ENCODE measurements at regions of chr4 and their contacts with region 1.

Region 1: DNA sequence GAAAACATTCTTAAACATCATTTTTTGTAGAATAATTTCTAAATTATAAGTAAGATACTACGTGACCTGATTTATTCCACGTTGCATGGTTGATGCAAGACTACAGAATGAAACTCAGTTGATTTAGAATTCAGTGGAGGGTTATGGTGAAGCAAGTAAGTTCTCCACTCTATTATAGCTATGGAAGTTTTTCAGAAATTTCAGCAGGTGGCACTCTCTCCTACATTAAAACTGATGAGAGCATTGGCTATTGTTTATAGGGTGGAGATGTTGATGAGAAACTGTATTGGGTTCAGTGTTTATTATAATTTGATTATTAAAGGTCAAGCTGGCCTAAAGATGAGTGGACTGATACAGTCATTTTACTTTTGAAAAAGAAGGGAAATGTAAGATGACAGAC is 88.0 kb downstream of the FNIP2 start:
- DNase-seq: peak; percentile 44
- H3K4me3 ChIP-seq: no peak overlapping the region; a peak in 1 of 4 replicates
- H3K27ac ChIP-seq: peak overlapping the region in 1 of 2 experiments; percentile 18; a peak in 1 of 4 replicates
- H3K4me1 ChIP-seq: peaks cover 0 to 11% of the 10 kb centered on the region in 2 experiments; a peak in 2 of 4 replicates
- H3K27me3 ChIP-seq: no peaks in the 10 kb centered on the region
- CTCF ChIP-seq: peak; percentile 74
- EP300 ChIP-seq: no peak
- RAD21 ChIP-seq: peak; percentile 81

Region 2: DNA sequence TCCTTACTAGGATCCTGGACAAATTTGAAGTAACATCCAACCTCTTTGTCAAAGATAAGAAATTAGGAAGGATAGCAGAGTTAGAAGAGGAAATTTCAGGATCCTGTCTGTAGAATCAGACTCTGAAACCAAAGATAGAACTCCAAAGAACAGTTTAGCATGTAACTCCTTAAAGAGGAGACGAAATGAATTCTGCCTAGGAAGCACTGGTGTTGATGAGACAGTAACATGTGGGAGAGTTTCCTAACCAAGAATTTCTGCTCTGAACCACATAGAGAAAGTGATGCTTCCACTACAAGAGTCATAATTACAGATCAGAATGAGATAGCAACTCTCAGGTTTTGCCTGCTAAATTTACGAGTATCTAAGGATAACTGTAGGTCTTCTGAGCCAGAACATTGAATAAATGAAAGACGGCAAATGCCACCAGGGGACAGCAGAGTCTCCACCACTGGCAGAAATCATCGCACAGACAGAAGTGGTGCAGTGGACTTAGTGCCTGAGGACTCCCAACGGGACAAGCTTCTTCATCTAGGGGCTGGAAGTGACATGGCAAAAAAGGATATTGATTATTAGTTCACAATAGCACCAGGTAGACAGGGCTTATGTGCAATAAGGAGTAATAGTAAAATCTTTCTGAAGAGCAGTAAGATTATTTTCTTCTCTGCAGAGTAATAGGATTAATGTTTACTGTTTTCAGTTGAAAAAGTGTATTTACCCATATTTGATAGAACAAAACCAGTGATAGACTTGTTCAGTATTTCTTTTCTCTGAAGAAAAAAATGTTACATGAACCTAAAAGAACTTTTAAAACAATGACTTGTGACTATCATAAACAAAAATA is 126.9 kb before region 1 on chr4:
- CTCF ChIA-PET with region 1: interaction called, 16 read pairs
- POLR2A ChIA-PET with region 1: no interaction called
- DNase-seq: peak; percentile 75
- H3K4me3 ChIP-seq: no peak overlapping the region
- H3K27ac ChIP-seq: no peak overlapping the region
- H3K4me1 ChIP-seq: no peaks in the 10 kb centered on the region
- H3K27me3 ChIP-seq: no peaks in the 10 kb centered on the region
- CTCF ChIP-seq: peak; percentile 93
- EP300 ChIP-seq: no peak
- RAD21 ChIP-seq: peak; percentile 97

Region 3: DNA sequence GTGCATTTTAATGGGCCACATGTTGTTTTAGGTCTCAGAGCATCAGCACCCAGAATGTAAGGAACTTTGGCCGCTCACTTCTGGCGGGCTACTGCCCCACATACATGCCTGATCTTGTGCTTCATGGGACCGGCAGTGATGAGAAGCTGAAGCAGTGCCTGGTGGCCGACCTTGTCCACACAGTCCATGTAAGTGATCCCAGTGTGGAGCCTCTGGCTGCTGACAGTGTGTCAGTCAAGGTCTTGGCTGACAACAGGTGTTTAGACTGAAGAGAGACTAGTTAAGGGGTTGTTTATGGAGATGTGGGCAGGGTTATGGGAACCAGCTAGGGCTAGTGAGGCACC is 13.4 kb after region 1 on chr4:
- CTCF ChIA-PET with region 1: interaction called, 21 read pairs
- POLR2A ChIA-PET with region 1: no interaction called
- DNase-seq: no peak
- H3K4me3 ChIP-seq: no peak overlapping the region
- H3K27ac ChIP-seq: peak overlapping the region in 1 of 2 experiments; percentile 92; a peak in 2 of 4 replicates
- H3K4me1 ChIP-seq: peaks cover 18 to 37% of the 10 kb centered on the region in 2 experiments; a peak in 3 of 4 replicates
- H3K27me3 ChIP-seq: no peaks in the 10 kb centered on the region
- CTCF ChIP-seq: no peak
- EP300 ChIP-seq: no peak
- RAD21 ChIP-seq: no peak

Region 4: GRCh38 chr4:159175085-159175988 is 318.5 kb after region 1 on chr4:
- CTCF ChIA-PET with region 1: interaction called, 18 read pairs
- POLR2A ChIA-PET with region 1: no interaction called
- DNase-seq: peak; percentile 48
- H3K4me3 ChIP-seq: peak overlapping the region; percentile 40 to 63; a peak in 3 of 4 replicates
- H3K27ac ChIP-seq: peak overlapping the region; percentile 47 to 87; a peak in 3 of 4 replicates
- H3K4me1 ChIP-seq: peaks cover 6 to 37% of the 10 kb centered on the region in 2 experiments
- H3K27me3 ChIP-seq: no peaks in the 10 kb centered on the region
- CTCF ChIP-seq: peak; percentile 85
- EP300 ChIP-seq: peak in 1 of 2 experiments; percentile 31; a peak in 1 of 4 replicates
- RAD21 ChIP-seq: peak; percentile 97

Region 5: GRCh38 chr4:159201168-159201567 is 344.3 kb after region 1 on chr4:
- CTCF ChIA-PET with region 1: interaction called, 32 read pairs
- POLR2A ChIA-PET with region 1: no interaction called
- DNase-seq: no peak
- H3K4me3 ChIP-seq: no peak overlapping the region
- H3K27ac ChIP-seq: no peak overlapping the region
- H3K4me1 ChIP-seq: no peaks in the 10 kb centered on the region
- H3K27me3 ChIP-seq: no peaks in the 10 kb centered on the region
- CTCF ChIP-seq: no peak
- EP300 ChIP-seq: no peak
- RAD21 ChIP-seq: no peak

Measured in SK-N-SH (cell line).